OCI-LY7 (cell line): ENCODE measurements at regions of chr2 and their contacts with region 1.

Region 1: GRCh38 chr2:173354601-173355131 is at the start of gene CDCA7:
- DNase-seq: peak; percentile 86
- H3K4me3 ChIP-seq: peak within 1 kb of the TSS; percentile 100
- H3K27ac ChIP-seq: peak within 1 kb of the TSS; percentile 89
- H3K4me1 ChIP-seq: peaks cover 75% of the 10 kb centered on the region
- CTCF ChIP-seq: no peak
- total RNA-seq, gene CDCA7: 98.2 and 140 TPM in 2 replicates

Region 2: GRCh38 chr2:173027181-173028128 is 327.2 kb before region 1 on chr2:
- CTCF ChIA-PET with region 1: no interaction called
- POLR2A ChIA-PET with region 1: interaction called, 5 read pairs
- intact Hi-C with region 1: loop called (anchors 5 kb)
- DNase-seq: peak; percentile 85
- H3K4me3 ChIP-seq: no peak overlapping the region
- H3K27ac ChIP-seq: no peak overlapping the region
- H3K4me1 ChIP-seq: no peaks in the 10 kb centered on the region
- CTCF ChIP-seq: peak; percentile 99

Region 3: GRCh38 chr2:173218326-173219056 is 136.2 kb before region 1 on chr2:
- CTCF ChIA-PET with region 1: no interaction called
- POLR2A ChIA-PET with region 1: interaction called, 3 read pairs
- intact Hi-C with region 1: loop called (anchors 5 kb)
- DNase-seq: no peak
- H3K4me3 ChIP-seq: no peak overlapping the region
- H3K27ac ChIP-seq: no peak overlapping the region
- H3K4me1 ChIP-seq: no peaks in the 10 kb centered on the region
- CTCF ChIP-seq: no peak

Region 4: GRCh38 chr2:173286153-173286809 is 68.4 kb before region 1 on chr2:
- CTCF ChIA-PET with region 1: interaction called, 3 read pairs
- POLR2A ChIA-PET with region 1: interaction called, 4 read pairs
- intact Hi-C with region 1: loop called (anchors 5 kb)
- DNase-seq: peak; percentile 53
- H3K4me3 ChIP-seq: no peak overlapping the region
- H3K27ac ChIP-seq: no peak overlapping the region
- H3K4me1 ChIP-seq: no peaks in the 10 kb centered on the region
- CTCF ChIP-seq: peak; percentile 75

Region 5: DNA sequence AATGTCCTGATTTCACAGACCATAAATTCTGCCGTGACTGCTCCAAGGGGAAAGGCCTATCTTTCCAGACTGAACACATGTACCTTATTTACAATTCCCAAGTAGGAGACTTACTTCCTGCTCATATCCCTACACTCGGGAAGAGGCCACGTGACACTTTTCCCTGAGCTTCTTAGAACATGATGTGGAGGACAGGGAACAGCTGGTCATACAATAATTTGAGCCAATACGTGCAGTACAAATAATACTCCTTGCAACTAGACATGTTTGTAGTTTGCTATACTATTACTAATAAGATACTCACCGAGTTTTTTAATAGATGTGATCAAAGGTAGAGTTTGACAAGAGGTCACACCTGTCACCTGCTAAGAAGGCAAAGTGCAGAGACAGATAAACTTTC is 354.1 kb after region 1 on chr2:
- CTCF ChIA-PET with region 1: no interaction called
- POLR2A ChIA-PET with region 1: no interaction called
- intact Hi-C with region 1: no loop called
- DNase-seq: no peak
- H3K4me3 ChIP-seq: no peak overlapping the region
- H3K27ac ChIP-seq: no peak overlapping the region
- H3K4me1 ChIP-seq: no peaks in the 10 kb centered on the region
- CTCF ChIP-seq: no peak

Region 6: GRCh38 chr2:173965329-173966025 is 610.8 kb after region 1 on chr2 and contains the start of gene SP3:
- CTCF ChIA-PET with region 1: no interaction called
- POLR2A ChIA-PET with region 1: interaction called, 3 read pairs
- intact Hi-C with region 1: loop called (anchors 2 kb)
- DNase-seq: peak; percentile 97
- H3K4me3 ChIP-seq: peak within 1 kb of the TSS; percentile 100
- H3K27ac ChIP-seq: peak within 1 kb of the TSS; percentile 97
- H3K4me1 ChIP-seq: peaks cover 25% of the 10 kb centered on the region
- CTCF ChIP-seq: no peak
- total RNA-seq, gene SP3: 129 and 150 TPM in 2 replicates

Region 7: GRCh38 chr2:174634130-174635014 is 1279.7 kb after region 1 on chr2:
- CTCF ChIA-PET with region 1: no interaction called
- POLR2A ChIA-PET with region 1: no interaction called
- intact Hi-C with region 1: loop called (anchors 10 kb)
- DNase-seq: peak; percentile 78
- H3K4me3 ChIP-seq: peak overlapping the region; percentile 73
- H3K27ac ChIP-seq: peak overlapping the region; percentile 70
- H3K4me1 ChIP-seq: peaks cover 28% of the 10 kb centered on the region
- CTCF ChIP-seq: peak; percentile 64; the same call in 1 of the 2 replicates